ENCODE measurements at regions of chr16 and their contacts with region 1.

Region 1: GRCh38 chr16:25812215-25812614 is 120.5 kb downstream of the HS3ST4 start:
- DNase-seq: no peak
- ATAC-seq: no peak
- H3K4me3 ChIP-seq: no peak overlapping the region
- H3K27ac ChIP-seq: no peak overlapping the region
- H3K4me1 ChIP-seq: no peaks in the 10 kb centered on the region
- H3K27me3 ChIP-seq: peaks cover 0 to 3% of the 10 kb centered on the region in 2 experiments; a peak in 1 of 5 replicates
- CTCF ChIP-seq: no peak
- EP300 ChIP-seq: no peak
- POLR2A ChIP-seq: no peak
- RAD21 ChIP-seq: no peak

Region 2: DNA sequence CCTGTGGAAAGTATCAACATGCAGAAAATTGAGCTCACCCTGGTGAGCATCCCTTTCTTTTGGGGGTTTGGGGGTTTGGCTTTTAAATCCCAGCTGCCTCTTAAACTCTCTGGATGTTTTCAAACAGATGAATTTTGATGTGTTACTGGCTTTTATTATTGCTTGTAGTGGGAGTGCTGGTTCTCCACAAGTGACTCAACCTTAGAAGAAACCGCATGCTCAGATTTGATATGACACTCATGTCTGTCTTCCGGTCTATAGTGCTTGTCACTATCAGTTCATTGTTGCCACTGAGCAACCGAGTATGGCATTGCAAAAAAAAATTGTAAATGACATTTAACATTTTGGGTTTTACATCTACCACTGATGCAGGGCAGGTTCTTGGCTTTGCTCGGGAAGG is 16.0 kb before region 1 on chr16:
- CTCF ChIA-PET with region 1: no interaction called
- POLR2A ChIA-PET with region 1: no interaction called
- in situ Hi-C with region 1: no loop called
- intact Hi-C with region 1: no loop called
- DNase-seq: no peak
- ATAC-seq: no peak
- H3K4me3 ChIP-seq: no peak overlapping the region
- H3K27ac ChIP-seq: no peak overlapping the region
- H3K4me1 ChIP-seq: no peaks in the 10 kb centered on the region
- H3K27me3 ChIP-seq: 0 out of 5 replicates have a peak, but pooled peaks cover 0 to 3% of the 10 kb centered on the region in 2 experiments
- CTCF ChIP-seq: no peak
- EP300 ChIP-seq: no peak
- POLR2A ChIP-seq: no peak
- RAD21 ChIP-seq: no peak

Region 3: GRCh38 chr16:25845901-25846300 is 33.7 kb after region 1 on chr16:
- CTCF ChIA-PET with region 1: no interaction called
- POLR2A ChIA-PET with region 1: no interaction called
- in situ Hi-C with region 1: no loop called
- intact Hi-C with region 1: loop called (anchors 1 kb)
- DNase-seq: no peak
- ATAC-seq: no peak
- H3K4me3 ChIP-seq: no peak overlapping the region
- H3K27ac ChIP-seq: no peak overlapping the region
- H3K4me1 ChIP-seq: no peaks in the 10 kb centered on the region
- H3K27me3 ChIP-seq: no peaks in the 10 kb centered on the region
- CTCF ChIP-seq: no peak
- EP300 ChIP-seq: no peak
- POLR2A ChIP-seq: no peak
- RAD21 ChIP-seq: no peak

Measured in HepG2 (cell line).